ENCODE measurements at regions of chr1 and their contacts with region 1.

Region 1: DNA sequence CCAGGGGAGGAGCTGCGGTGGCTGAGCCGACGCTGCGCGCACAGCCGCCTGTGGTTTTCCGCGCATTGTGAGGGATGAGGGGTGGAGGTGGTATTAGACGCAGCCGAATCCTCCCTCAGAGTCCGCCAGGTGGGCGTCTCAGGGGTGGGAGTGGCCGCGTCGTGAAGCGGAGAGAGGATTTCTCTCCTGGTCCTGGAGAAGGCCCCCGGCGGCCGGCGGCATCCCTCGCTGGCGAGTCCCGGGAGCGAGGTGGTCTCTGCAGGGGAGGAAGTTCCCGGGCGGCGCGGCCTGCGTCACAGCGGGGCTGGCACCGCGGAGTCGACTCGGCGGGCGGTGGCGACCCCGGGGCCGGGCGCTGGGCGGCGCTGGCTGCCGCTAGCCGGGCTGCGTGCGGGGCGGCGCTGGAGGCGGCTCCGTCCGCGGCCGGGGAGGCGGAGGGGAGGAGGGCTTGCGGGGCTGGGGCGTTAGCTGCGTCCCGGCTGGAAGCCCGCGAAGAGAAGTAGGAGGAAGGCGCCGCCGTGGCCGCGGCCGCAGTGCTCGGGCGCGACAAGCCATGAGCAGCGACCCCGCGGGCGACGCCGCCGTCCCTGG is at the start of gene LRRC8C:
- DNase-seq: peak; percentile 90
- ATAC-seq: peak; percentile 81
- H3K4me3 Mint-ChIP-seq: peak within 1 kb of the TSS; percentile 93
- H3K27ac Mint-ChIP-seq: peak within 1 kb of the TSS; percentile 96
- H3K4me1 Mint-ChIP-seq: peaks cover 68% of the 10 kb centered on the region
- H3K27me3 Mint-ChIP-seq: no peaks in the 10 kb centered on the region
- CTCF ChIP-seq: peak; percentile 43
- total RNA-seq, gene LRRC8C: 34.4 to 37.4 TPM

Region 2: DNA sequence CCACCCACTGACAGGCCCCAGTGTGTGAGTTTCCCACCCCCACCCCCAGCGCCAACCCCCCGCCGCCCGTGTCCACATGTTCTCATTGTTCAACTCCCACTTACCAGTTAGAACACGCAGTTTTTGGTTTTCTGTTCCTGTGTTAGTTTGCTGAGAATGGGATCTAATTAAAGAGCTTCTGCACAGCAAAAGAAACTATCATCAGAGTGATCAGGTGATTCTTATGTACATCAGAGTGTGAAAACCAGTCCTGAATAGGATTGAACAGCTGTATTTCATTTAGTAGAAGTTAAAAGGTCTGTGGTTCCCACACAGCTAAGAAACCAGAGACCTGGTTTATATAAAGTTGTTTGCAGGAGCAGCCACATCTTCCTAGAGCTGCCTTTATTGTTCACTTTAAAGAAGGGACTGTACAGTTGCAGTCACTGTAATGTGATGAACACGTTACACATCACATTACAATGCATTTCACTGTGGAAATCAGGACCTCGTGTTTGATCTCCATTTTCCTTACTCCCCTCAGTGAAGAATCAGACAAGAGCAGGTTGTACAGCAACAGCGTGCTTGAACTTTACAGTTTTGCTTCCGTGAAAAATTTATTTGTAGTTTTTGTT is 267.7 kb before region 1 on chr1:
- CTCF ChIA-PET with region 1: no interaction called
- POLR2A ChIA-PET with region 1: no interaction called
- intact Hi-C with region 1: no loop called
- DNase-seq: no peak
- ATAC-seq: no peak
- H3K4me3 Mint-ChIP-seq: no peak overlapping the region
- H3K27ac Mint-ChIP-seq: no peak overlapping the region
- H3K4me1 Mint-ChIP-seq: peaks cover 16% of the 10 kb centered on the region
- H3K27me3 Mint-ChIP-seq: no peaks in the 10 kb centered on the region
- CTCF ChIP-seq: no peak

Region 3: GRCh38 chr1:89483010-89483756 is 149.6 kb before region 1 on chr1:
- CTCF ChIA-PET with region 1: interaction called, 27 read pairs
- POLR2A ChIA-PET with region 1: no interaction called
- intact Hi-C with region 1: loop called (anchors 5 kb)
- DNase-seq: peak; percentile 94
- ATAC-seq: peak; percentile 87
- H3K4me3 Mint-ChIP-seq: no peak overlapping the region
- H3K27ac Mint-ChIP-seq: no peak overlapping the region
- H3K4me1 Mint-ChIP-seq: peaks cover 21% of the 10 kb centered on the region
- H3K27me3 Mint-ChIP-seq: peaks cover 3% of the 10 kb centered on the region
- CTCF ChIP-seq: peak; percentile 85

Region 4: DNA sequence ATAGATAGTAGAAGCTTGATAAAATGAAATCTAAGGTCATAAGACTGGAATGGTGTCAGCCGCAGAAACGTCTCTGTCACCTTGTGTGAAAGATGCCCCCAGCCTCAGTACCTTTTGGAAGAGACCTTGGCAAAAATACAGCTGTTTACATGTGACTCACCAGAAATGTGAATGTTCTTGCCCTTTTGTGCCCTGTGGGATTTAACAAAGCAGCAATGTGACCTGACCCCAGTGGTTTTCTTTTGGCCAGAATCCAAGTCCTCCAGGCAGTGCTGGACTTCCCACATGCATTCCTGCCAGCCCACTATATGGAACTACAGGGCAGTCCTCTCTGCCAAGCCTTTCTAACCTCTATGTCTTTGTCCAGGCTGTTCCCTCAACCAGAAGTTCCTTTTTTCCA is 27.1 kb before region 1 on chr1:
- CTCF ChIA-PET with region 1: interaction called, 76 read pairs
- POLR2A ChIA-PET with region 1: interaction called, 76 read pairs
- intact Hi-C with region 1: loop called (anchors 2 kb)
- DNase-seq: no peak
- ATAC-seq: no peak
- H3K4me3 Mint-ChIP-seq: peak overlapping the region; percentile 20
- H3K27ac Mint-ChIP-seq: peak overlapping the region; percentile 99
- H3K4me1 Mint-ChIP-seq: peaks cover 97% of the 10 kb centered on the region
- H3K27me3 Mint-ChIP-seq: no peaks in the 10 kb centered on the region
- CTCF ChIP-seq: no peak

Region 5: DNA sequence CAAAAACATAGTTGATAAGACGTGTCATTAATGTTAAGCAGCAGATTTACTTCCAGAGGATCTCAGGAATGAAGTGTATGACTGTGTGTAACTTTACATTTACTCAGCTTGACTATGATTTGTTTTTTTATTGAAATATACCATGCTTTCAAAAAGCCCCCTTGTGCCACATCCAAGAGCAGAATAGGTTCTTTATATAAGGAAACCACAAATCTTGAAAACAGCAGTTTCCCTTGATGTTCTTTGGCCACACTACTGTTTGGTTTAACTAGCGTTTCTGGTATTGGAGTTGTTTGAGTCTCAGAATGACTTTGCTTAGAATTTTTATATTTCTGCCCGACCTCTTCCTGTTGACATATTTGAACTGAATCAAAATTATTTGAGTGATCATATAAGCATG is 25.1 kb after region 1 on chr1:
- CTCF ChIA-PET with region 1: interaction called, 12 read pairs
- POLR2A ChIA-PET with region 1: interaction called, 16 read pairs
- intact Hi-C with region 1: loop called (anchors 1 kb)
- DNase-seq: peak; percentile 58
- ATAC-seq: peak; percentile 71
- H3K4me3 Mint-ChIP-seq: no peak overlapping the region
- H3K27ac Mint-ChIP-seq: peak overlapping the region; percentile 87
- H3K4me1 Mint-ChIP-seq: peaks cover 85% of the 10 kb centered on the region
- H3K27me3 Mint-ChIP-seq: no peaks in the 10 kb centered on the region
- CTCF ChIP-seq: no peak

Region 6: DNA sequence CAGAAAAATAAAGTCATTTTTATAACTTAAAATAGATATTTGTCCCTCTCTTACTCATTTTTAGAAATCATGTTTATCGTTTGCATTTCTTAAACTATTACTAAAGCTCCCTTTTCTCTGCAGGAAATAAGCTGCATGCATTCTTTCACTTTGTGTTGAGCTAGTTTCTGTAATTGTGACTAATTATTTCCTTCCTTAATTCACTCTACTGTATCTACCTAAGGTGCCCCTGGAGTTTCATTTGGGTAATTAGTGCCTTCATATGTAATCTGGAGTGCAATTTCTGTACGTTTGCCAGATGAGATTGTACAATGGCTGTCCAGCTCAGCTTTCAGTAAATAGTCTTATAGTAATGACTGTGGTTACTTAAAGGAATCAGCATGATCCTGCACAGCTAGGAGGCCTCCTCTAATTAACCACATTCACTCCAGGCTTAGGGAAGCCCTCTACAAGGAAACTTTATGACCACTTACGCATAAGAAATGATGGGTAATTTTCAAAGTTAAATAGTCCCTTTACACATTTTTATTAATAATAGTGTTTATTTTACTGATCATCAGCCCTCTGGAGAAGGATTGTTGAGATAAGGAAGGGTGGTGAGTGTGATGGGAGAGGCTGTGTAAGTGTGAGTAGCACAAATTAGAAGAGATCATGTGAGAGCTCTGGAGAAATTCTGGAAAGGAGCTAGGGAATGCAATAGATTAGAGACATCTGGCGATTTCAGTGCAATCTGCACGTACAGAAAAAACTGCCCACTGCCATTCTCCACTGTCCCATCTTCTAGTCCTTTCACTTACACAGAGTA is 87.0 kb after region 1 on chr1:
- CTCF ChIA-PET with region 1: interaction called, 14 read pairs
- POLR2A ChIA-PET with region 1: interaction called, 51 read pairs
- intact Hi-C with region 1: loop called (anchors 1 kb)
- DNase-seq: peak; percentile 33
- ATAC-seq: peak; percentile 80
- H3K4me3 Mint-ChIP-seq: peak overlapping the region; percentile 53
- H3K27ac Mint-ChIP-seq: peak overlapping the region; percentile 98
- H3K4me1 Mint-ChIP-seq: peaks cover 90% of the 10 kb centered on the region
- H3K27me3 Mint-ChIP-seq: no peaks in the 10 kb centered on the region
- CTCF ChIP-seq: peak; percentile 50

Region 7: DNA sequence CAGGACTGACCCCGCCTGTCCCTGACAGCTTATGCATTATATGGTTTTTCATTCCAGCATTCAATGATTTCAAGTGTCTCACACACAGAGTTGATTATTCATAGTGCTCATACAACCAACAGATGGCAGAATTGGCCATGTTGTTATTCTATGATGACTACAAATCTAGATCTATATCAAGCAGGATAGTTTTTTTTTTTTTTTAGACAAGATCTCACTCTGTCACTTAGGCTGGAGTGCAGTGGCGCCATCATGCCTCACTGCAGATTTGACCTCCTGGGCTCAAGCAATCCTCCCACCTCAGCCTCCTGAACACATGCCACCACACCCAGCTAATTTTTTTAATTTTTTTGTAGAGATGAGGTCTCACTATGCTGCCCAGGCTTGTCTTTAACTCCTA is 148.0 kb after region 1 on chr1:
- CTCF ChIA-PET with region 1: interaction called, 16 read pairs
- POLR2A ChIA-PET with region 1: interaction called, 8 read pairs
- intact Hi-C with region 1: no loop called
- DNase-seq: peak; percentile 62
- ATAC-seq: peak; percentile 68
- H3K4me3 Mint-ChIP-seq: peak overlapping the region; percentile 36
- H3K27ac Mint-ChIP-seq: peak overlapping the region; percentile 93
- H3K4me1 Mint-ChIP-seq: peaks cover 48% of the 10 kb centered on the region
- H3K27me3 Mint-ChIP-seq: no peaks in the 10 kb centered on the region
- CTCF ChIP-seq: peak; percentile 56

Region 8: DNA sequence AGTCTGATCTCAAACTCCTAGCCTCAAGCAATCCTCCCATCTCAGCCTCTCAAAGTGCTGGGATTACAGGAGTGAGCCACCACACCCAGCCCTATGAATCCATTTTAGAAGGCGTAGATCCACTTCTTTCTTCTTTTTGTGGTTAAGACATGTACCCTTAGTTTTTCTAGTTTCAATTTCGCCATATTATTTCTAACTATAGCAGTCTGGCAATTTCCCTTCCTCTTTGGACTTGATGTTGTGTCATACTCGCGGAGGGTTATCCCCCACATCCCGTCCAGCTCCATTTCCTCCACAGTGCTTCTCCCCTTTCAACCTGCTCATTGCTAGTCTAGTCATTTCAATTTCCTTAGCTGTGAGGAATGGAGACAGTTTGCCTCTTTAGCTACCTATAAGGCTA is 182.9 kb after region 1 on chr1:
- CTCF ChIA-PET with region 1: no interaction called
- POLR2A ChIA-PET with region 1: no interaction called
- intact Hi-C with region 1: no loop called
- DNase-seq: no peak
- ATAC-seq: peak; percentile 35
- H3K4me3 Mint-ChIP-seq: no peak overlapping the region
- H3K27ac Mint-ChIP-seq: no peak overlapping the region
- H3K4me1 Mint-ChIP-seq: peaks cover 30% of the 10 kb centered on the region
- H3K27me3 Mint-ChIP-seq: peaks cover 2% of the 10 kb centered on the region
- CTCF ChIP-seq: no peak

Region 9: DNA sequence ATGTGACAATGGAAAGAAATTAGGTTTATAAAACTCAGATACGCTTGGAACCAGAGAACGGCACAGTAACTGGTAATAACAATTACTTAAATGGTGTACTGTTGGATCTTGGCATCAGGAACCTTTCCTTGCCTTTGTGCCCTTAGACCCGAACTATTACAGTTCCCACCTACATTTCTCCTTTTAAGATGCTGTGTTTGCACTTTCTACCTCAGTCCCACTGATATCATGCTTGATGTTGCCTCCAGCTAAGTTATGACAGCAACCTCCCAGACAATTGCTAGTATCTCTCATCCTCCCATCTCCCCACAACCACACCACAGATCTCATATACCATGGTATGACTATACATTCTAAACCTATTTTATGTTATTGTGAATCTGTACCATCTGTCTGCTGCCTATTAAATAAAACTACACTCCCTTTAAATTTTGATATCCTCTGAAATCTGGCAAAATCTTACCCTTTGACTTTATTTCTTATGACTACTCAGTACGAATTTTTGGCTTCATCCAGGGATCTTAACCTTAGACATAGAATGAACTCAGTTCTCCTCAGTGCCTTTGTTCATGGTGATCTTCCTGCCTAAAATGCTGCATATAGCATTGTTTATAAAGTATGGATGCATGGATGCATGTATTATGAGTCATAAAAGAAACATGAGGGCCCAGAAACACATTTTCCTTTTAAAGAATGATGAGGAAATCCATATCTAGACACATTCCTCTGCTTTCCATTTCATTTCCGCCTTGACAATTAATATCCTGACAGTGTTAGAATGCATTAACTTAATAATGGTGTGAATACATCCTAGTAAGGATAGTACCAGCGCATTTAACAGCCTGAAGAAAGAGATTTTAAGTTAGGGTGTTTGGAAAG is 252.2 kb after region 1 on chr1:
- CTCF ChIA-PET with region 1: no interaction called
- POLR2A ChIA-PET with region 1: no interaction called
- intact Hi-C with region 1: no loop called
- DNase-seq: no peak
- ATAC-seq: no peak
- H3K4me3 Mint-ChIP-seq: no peak overlapping the region
- H3K27ac Mint-ChIP-seq: no peak overlapping the region
- H3K4me1 Mint-ChIP-seq: peaks cover 51% of the 10 kb centered on the region
- H3K27me3 Mint-ChIP-seq: no peaks in the 10 kb centered on the region
- CTCF ChIP-seq: no peak

Measured in activated CD8-positive, alpha-beta T cell treated with anti-CD3 and anti-CD28 coated beads for 36 hours (primary cell).